Mammary epithelial cell (primary cell): ENCODE measurements at regions of chr3 and their contacts with region 1.

Region 1: DNA sequence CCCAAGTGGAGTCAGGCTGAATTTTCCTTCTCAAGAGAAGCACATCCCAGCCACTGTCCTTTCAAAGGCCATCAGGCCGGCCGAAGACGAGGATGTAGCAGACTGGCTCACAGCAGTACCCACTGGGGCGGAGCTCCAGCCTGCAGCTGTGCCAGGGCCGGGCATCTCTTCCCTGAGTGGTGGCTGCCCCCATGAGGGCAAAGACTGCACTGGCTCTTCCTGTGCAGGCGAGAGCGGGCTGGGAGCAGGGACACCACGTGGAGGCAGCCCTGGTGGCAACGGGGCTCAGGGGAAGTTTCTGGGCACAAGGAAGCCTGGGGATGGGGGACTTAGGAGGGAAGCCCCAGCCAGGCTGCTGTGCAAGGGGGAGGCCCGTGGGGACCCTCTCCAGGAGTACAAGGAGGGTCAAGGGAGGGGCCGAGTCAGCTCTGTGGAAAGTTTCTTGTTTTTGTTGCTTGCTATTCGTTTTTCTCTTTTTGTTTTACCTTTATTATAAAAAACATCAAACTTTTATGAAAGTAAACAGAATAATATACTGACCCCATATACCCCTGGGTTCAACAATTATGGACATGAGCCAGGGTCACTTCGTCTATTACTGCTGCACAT is 66.1 kb downstream of the RPN1 start:
- DNase-seq: peak; percentile 67
- H3K4me3 ChIP-seq: no peak overlapping the region
- H3K27ac ChIP-seq: no peak overlapping the region
- H3K4me1 ChIP-seq: peaks cover 2% of the 10 kb centered on the region
- H3K27me3 ChIP-seq: no peaks in the 10 kb centered on the region
- CTCF ChIP-seq: peak; percentile 84 to 94

Region 2: DNA sequence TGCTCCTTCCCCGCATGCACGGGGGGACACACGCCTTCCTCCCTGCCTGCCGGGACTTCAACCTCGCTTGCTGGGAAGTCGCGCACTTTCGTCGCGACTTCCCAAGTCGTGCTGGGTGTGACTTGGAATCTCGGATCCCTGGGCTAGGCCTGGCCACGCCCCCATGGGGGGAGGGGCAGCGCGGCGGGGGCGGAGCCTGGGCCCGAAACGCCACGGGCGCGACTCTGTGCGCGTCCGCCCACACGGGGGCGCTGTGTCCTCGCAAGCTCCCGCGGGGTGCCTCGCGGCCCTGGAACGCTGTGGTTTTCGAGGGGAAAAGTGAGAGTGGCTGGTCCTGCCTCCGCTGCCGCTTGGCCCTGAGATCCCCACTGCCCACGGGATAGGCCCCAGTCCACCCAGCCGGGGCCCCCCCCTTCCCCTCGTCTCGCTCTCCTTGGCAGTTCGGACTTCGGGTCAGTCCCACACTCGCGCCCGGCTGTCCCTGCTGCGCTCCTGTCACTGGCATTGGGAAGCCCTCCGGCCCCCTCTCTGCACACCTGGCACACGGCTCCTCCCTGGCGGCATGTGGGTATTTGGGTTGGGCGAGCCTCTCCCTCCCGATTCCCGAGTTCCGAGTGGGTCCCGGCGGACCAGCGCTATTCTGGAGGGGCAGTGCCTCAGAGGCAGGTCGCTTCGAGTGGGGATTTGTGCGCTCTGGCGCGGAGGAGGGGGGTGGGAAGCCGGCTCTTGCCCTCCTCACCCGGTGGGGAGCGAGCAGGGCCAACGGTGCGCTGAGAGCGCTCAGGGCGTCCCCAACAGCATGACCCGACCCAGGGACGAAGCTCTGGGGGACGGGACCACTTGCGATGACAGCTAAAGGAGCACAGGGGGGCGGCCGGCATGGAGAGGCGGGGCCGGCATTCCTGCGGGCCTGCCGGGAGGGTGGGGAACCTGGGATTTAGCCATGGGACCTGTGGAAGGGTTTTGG is 508.7 kb before region 1 on chr3:
- CTCF ChIA-PET with region 1: no interaction called
- dilution Hi-C with region 1: no loop called
- in situ Hi-C with region 1: no loop called
- intact Hi-C with region 1: loop called (anchors 1 kb)
- DNase-seq: peak; percentile 70
- H3K4me3 ChIP-seq: peak overlapping the region in 2 of 3 experiments; percentile 17 to 49
- H3K27ac ChIP-seq: no peak overlapping the region
- H3K4me1 ChIP-seq: peaks cover 43% of the 10 kb centered on the region
- H3K27me3 ChIP-seq: no peaks in the 10 kb centered on the region
- CTCF ChIP-seq: peak; percentile 80 to 90

Region 3: DNA sequence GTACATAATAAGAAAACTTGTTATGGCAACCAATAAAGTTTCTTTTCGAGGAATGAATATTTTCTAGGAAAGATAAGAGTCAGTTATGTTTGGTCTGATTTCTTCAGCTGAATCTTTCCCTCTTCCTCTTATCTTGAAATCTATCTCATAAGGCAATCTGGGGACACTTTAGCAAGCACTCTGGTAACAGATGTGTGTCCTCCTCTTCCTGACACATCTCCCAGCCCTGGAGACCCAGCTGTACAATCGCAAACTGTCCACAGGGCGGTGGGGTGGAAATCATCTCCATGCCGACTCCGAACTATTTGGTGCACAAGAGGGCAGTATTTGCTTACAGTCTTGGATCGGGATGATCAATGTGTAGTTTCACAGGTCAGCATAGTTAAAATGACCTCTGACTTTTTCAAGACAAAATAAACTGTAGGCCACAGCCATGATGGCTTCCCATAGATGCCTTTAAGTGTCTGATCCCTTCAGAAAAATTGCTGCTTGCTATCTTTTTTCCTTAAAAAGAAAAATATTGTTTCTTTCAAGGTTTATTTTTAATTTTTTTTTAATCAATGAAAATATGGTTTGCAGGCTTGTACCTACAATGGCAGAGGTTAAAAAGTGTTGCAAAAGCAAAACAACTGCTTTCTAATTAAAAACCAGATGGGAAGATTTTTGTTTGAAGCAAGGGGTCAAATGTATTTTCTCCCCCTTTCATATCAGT is 413.6 kb before region 1 on chr3:
- CTCF ChIA-PET with region 1: no interaction called
- dilution Hi-C with region 1: no loop called
- in situ Hi-C with region 1: no loop called
- intact Hi-C with region 1: loop called (anchors 1 kb)
- DNase-seq: peak; percentile 61
- H3K4me3 ChIP-seq: no peak overlapping the region
- H3K27ac ChIP-seq: no peak overlapping the region
- H3K4me1 ChIP-seq: no peaks in the 10 kb centered on the region
- H3K27me3 ChIP-seq: no peaks in the 10 kb centered on the region
- CTCF ChIP-seq: peak; percentile 67 to 72

Region 4: DNA sequence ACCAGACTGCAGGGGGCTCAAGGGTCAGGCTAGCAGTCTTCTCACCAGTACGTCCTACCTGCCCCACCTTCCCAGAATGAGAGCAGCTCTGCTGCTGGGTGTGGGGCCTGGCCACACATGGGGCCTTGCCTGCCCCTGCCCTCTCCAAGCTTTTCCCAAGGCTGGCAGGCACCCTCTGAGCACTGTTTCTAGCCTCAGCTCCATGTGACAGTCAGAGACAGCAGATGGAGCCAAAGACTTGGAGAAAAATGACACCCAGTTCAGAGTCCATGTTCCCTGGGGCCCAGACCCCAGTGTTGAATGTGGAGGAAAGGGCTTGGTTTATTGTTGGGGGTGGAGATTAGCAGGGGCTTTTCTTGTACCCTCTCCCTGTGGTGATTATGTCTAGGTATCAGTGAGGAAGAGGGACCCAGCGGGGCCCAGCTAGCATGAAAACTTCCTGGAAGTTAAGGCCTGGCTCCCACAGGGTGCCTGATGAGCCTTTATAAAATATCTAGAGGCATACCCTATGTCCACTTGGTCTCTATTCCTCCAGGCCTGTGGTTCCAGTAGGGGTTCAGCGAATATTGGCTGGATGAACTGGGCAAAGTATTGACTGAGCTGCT is 277.4 kb before region 1 on chr3:
- CTCF ChIA-PET with region 1: no interaction called
- dilution Hi-C with region 1: no loop called
- in situ Hi-C with region 1: no loop called
- intact Hi-C with region 1: loop called (anchors 5 kb)
- DNase-seq: no peak
- H3K4me3 ChIP-seq: no peak overlapping the region
- H3K27ac ChIP-seq: no peak overlapping the region
- H3K4me1 ChIP-seq: no peaks in the 10 kb centered on the region
- H3K27me3 ChIP-seq: no peaks in the 10 kb centered on the region
- CTCF ChIP-seq: no peak

Region 5: GRCh38 chr3:128426128-128426921 is 158.2 kb before region 1 on chr3:
- CTCF ChIA-PET with region 1: interaction called, 6 read pairs
- dilution Hi-C with region 1: loop called (anchors 25 kb)
- in situ Hi-C with region 1: loop called (anchors 10 to 25 kb)
- intact Hi-C with region 1: loop called (anchors 1 kb)
- DNase-seq: peak; percentile 10
- H3K4me3 ChIP-seq: peak overlapping the region in 1 of 3 experiments; percentile 31
- H3K27ac ChIP-seq: no peak overlapping the region
- H3K4me1 ChIP-seq: peaks cover 7% of the 10 kb centered on the region
- H3K27me3 ChIP-seq: no peaks in the 10 kb centered on the region
- CTCF ChIP-seq: peak; percentile 66 to 69

Region 6: DNA sequence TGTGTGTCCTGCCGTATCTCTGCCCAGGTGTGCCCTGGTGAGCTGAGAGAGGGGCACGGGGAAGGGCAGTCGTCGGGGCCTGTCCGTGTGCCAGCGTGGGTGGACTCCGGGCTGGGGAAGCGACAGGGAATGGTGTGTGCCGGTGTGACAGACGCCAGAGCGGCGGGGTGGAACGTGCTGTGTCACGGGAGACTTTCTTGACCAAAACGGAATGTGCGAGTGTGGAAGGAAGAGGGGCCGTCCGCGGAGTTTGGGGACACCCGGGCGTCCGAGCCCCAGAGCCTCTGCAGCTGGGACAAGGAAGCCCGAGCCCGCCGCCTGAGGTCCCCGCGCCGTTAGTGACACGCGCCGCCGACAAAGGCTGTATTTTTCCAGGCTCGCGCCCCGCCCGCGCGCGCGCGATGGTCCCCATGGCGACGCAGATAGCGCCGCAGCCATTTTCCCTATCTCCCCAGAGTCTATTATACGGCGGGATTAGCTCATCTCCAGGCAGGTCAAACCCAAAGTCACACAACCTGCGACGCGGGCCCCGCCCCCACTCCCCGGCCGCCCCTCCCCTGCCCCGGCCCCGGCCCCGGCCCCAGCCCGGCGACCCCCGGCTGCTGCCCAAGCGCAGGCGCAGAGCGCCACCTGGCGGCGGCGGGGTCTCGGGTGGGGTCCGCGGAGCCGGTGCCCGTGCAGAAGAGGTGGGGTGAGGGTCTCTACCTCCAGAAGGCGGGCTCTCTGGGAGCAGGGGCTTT is 87.0 kb before region 1 on chr3:
- CTCF ChIA-PET with region 1: no interaction called
- dilution Hi-C with region 1: no loop called
- in situ Hi-C with region 1: no loop called
- intact Hi-C with region 1: loop called (anchors 1 kb)
- DNase-seq: no peak
- H3K4me3 ChIP-seq: peak overlapping the region; percentile 20 to 60 (median 50)
- H3K27ac ChIP-seq: no peak overlapping the region
- H3K4me1 ChIP-seq: peaks cover 6% of the 10 kb centered on the region
- H3K27me3 ChIP-seq: peaks cover 21% of the 10 kb centered on the region
- CTCF ChIP-seq: peak; percentile 40 to 63

Region 7: DNA sequence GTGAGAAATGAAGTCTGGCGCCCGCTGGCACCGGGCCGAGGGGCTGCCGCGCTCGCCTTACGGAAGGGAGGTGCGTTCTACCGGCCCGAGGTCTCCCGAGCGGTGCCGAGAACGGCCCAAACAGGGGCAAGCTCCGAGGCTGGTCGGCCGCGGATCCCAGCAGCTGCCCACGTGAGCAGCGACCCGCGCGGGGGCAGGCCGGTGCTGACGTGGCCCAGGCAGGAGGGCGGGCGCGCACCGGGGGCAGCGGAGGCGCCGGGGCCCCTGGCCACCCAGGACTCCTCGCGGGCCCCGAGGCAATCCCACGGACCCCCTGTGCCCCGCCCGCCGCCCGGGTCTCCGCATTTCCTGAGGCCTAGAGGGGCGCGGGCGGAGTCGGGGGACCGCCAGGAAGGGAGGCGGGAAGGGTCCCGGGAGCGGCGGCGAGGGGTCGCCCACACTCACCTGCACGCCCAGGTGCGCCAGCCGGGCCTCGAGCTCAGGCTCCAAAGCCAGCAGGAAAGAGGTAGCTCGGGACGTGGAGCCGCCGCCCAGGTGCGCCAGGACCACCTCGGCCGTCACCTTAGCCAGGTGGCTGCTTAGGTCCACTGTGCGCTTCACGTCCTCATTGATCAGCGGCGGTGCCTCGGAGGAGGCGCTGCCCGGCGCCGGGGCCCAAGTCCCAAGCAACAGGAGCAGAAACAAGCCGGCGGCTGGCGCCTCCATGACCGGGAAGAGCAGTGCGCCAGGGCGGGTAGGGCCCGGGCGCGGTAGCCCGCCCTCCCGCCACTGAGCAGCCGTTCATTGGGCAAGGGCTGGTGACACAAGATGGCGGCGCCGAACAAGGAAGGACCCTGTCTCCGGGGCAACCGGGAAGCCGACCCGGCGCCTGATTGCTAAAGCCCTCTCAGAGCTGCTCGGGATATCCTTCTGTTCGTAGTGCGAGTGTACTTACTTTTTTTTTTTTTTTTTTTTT is 65.9 kb after region 1 on chr3 and contains the start of gene RPN1:
- CTCF ChIA-PET with region 1: no interaction called
- dilution Hi-C with region 1: no loop called
- in situ Hi-C with region 1: no loop called
- intact Hi-C with region 1: no loop called
- DNase-seq: peak; percentile 90
- H3K4me3 ChIP-seq: peak within 1 kb of the TSS; percentile 90 to 100 (median 100)
- H3K27ac ChIP-seq: peak within 1 kb of the TSS; percentile 95
- H3K4me1 ChIP-seq: peaks cover 6% of the 10 kb centered on the region
- H3K27me3 ChIP-seq: no peaks in the 10 kb centered on the region
- CTCF ChIP-seq: no peak
- total RNA-seq, gene RPN1: 206 to 305 TPM

Region 8: DNA sequence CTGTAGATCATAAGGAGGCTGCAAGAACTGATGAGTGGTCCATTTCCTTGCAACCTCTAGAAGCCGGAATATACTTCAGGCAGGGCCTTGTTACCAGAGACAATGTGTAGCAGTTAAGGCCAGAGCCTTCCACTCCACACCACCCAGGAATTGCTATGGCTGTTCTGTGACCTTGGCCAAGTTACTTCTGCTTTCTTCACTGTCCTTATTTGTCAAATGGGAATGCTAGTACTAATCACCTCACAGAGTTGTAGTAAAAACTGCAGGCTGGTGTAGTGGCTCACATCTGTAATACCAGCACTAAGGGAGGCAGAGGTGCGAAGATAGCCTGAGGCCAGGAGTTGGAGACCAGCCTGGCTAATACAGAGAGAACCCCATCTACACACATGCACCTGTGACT is 94.8 kb after region 1 on chr3:
- CTCF ChIA-PET with region 1: no interaction called
- dilution Hi-C with region 1: no loop called
- in situ Hi-C with region 1: no loop called
- intact Hi-C with region 1: no loop called
- DNase-seq: no peak
- H3K4me3 ChIP-seq: no peak overlapping the region
- H3K27ac ChIP-seq: no peak overlapping the region
- H3K4me1 ChIP-seq: no peaks in the 10 kb centered on the region
- H3K27me3 ChIP-seq: no peaks in the 10 kb centered on the region
- CTCF ChIP-seq: no peak